ENCODE measurements at regions of chr5 and their contacts with region 1.

Region 1: DNA sequence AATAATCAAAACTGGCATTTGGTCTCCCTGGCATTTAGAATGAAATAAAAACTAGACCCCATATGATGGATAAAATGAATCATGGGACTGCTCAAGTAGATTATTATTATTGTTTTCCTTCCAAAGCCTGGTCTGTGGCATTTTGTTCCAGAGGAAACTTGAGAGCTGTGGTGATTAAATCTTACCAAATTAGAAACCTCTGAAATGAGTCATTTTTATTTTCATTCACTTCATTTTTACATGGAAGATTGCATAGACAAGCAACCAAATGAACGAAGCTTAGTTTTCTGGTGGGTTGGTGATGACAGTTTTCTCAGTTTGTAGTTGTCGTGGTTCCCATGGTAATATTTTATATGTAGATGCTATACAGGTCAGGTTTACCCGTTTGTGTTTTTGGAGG is 23.4 kb downstream of the PAM start:
- DNase-seq: peak; percentile 64
- ATAC-seq: peak; percentile 53
- H3K4me3 ChIP-seq: no peak overlapping the region
- H3K27ac ChIP-seq: peak overlapping the region; percentile 3; the same call in 1 of the 2 replicates
- H3K4me1 ChIP-seq: peaks cover 27% of the 10 kb centered on the region
- H3K27me3 ChIP-seq: no peaks in the 10 kb centered on the region
- CTCF ChIP-seq: no peak

Region 2: GRCh38 chr5:102536323-102536928 is 242.1 kb before region 1 on chr5:
- CTCF ChIA-PET with region 1: no interaction called
- POLR2A ChIA-PET with region 1: no interaction called
- intact Hi-C with region 1: loop called (anchors 5 kb)
- DNase-seq: peak; percentile 63
- ATAC-seq: peak; percentile 57
- H3K4me3 ChIP-seq: no peak overlapping the region
- H3K27ac ChIP-seq: no peak overlapping the region
- H3K4me1 ChIP-seq: no peaks in the 10 kb centered on the region
- H3K27me3 ChIP-seq: peaks cover 3% of the 10 kb centered on the region
- CTCF ChIP-seq: peak; percentile 79

Region 3: GRCh38 chr5:102767862-102768261 is 10.6 kb before region 1 on chr5:
- CTCF ChIA-PET with region 1: no interaction called
- POLR2A ChIA-PET with region 1: no interaction called
- intact Hi-C with region 1: loop called (anchors 1 kb)
- DNase-seq: no peak
- ATAC-seq: no peak
- H3K4me3 ChIP-seq: no peak overlapping the region
- H3K27ac ChIP-seq: no peak overlapping the region
- H3K4me1 ChIP-seq: peaks cover 15% of the 10 kb centered on the region
- H3K27me3 ChIP-seq: no peaks in the 10 kb centered on the region
- CTCF ChIP-seq: no peak

Region 4: GRCh38 chr5:102971697-102972293 is 193.3 kb after region 1 on chr5:
- CTCF ChIA-PET with region 1: no interaction called
- POLR2A ChIA-PET with region 1: no interaction called
- intact Hi-C with region 1: loop called (anchors 1 kb)
- DNase-seq: peak; percentile 70
- ATAC-seq: peak; percentile 82
- H3K4me3 ChIP-seq: no peak overlapping the region
- H3K27ac ChIP-seq: no peak overlapping the region
- H3K4me1 ChIP-seq: peaks cover 6% of the 10 kb centered on the region; the same call in 1 of the 2 replicates
- H3K27me3 ChIP-seq: no peaks in the 10 kb centered on the region
- CTCF ChIP-seq: peak; percentile 86

Region 5: DNA sequence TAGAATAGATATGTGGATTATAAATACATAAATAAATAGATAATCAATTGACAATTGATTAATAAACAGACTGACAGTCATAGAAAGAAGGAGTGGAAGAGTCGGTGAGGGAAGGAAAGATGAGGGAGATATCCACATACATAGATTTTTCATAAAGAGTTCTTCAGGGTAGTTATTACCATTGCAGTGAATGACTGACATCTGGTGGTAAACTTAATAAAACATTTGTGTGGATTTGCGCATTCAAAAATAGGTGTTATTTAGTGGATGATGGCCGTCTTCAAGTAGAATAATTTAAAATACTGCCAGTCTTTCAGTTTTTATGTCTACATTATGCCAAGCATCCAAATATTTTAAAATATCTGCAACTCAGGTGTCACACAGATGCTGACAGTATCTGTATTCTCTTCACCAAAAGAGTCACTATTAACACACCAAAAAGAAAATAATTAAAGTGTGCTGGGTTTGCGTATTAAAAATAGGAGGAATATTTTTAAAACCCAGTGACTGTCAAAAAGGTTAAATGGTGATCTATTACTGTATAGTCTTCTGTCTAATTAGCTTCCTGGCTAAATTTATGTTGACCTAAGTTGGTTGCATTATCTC is 262.7 kb after region 1 on chr5:
- CTCF ChIA-PET with region 1: interaction called, 3 read pairs
- POLR2A ChIA-PET with region 1: no interaction called
- intact Hi-C with region 1: loop called (anchors 1 kb)
- DNase-seq: peak; percentile 88
- ATAC-seq: peak; percentile 78
- H3K4me3 ChIP-seq: no peak overlapping the region
- H3K27ac ChIP-seq: no peak overlapping the region
- H3K4me1 ChIP-seq: peaks cover 8% of the 10 kb centered on the region; the same call in 1 of the 2 replicates
- H3K27me3 ChIP-seq: no peaks in the 10 kb centered on the region
- CTCF ChIP-seq: peak; percentile 82

Region 6: DNA sequence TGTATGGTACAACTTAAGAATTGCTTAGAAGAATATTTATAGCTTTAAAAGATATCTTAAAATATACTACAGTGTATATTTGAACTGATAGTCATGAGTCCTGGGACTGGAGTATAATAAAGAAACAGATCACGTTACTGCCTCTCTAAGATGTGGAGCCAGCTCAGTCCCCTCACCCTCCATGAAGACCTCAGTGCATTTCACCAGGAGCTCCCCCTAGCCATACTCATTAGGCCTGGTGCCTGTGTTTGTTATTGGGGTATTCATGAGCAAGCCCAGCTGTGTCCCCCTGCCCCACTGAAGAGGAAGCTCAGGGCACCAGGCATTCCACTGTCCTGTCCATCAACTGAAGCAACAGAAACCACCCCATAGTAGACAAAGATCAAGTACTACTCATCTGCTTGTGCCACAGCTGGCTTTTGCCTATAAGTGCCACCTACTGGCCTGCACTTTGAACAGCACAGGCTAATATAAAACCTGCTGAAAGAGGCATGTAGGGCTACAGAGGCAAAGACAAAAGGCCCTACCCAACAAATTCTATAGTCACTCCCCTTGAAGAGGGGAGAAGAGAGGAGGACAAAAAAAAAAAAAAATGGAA is 1634.3 kb after region 1 on chr5:
- CTCF ChIA-PET with region 1: no interaction called
- POLR2A ChIA-PET with region 1: no interaction called
- intact Hi-C with region 1: loop called (anchors 10 kb)
- DNase-seq: peak; percentile 64
- ATAC-seq: peak; percentile 64
- H3K4me3 ChIP-seq: no peak overlapping the region
- H3K27ac ChIP-seq: no peak overlapping the region
- H3K4me1 ChIP-seq: peaks cover 13% of the 10 kb centered on the region
- H3K27me3 ChIP-seq: no peaks in the 10 kb centered on the region
- CTCF ChIP-seq: peak; percentile 79